ENCODE measurements at regions of chr4 and their contacts with region 1.

Region 1: DNA sequence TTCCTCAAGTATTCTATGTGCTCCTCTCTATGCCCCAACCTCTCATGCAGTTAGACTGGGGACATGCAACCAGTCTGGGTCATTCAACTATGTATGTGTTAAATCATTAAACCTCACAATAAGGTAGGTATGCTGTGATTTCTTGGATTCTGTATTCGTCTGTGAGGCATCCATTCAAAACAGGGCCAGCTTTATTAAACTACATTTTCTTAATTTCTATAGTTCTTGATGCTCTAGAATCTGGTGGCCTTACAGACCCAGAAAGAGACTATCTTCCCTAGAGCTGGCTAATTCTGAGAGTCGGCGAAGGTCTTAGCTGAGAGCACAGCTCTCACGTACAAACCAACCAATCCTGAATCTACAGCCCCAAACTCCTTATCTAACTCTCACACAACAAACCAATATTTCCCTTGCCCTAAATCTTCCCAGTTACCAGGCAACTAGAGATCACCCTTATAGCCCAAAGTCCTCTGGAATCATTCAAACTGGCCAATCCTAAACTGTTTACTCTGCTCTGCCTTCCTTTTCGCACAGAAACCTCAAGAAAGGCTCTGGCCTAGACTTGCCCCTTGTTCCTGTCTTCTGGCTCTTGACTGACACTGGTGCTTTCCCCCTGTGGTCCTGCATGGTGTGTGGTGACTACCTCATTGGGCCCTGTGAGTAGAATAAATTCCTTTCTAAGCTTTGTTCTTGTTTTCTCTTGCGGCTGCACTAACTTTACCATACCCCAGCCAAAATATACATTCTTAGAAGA is 203.5 kb upstream of the TET2 start:
- DNase-seq: peak; percentile 73
- ATAC-seq: peak; percentile 95
- H3K4me3 Mint-ChIP-seq: peak overlapping the region; percentile 57
- H3K27ac Mint-ChIP-seq: peak overlapping the region; percentile 85
- H3K4me1 Mint-ChIP-seq: peaks cover 35% of the 10 kb centered on the region
- H3K27me3 Mint-ChIP-seq: no peaks in the 10 kb centered on the region

Region 2: DNA sequence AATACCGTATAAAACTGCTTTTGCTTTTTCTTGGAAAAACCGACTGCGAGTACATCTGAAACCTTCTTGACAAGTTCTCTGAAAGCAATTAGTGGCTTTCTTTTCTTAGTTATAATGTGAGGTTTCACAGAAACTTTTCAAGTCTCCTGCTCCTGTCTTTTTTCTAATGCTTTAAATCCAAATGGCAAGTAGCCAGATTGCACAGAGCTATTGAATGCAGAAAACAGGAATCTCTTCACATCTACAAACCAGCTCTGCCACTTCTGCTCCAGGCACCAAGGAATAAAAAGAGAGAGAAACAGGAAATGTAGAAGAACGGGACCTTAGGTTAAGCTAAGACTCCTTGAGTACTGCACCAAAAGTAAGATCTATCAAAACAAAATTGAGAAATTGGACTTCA is 63.8 kb before region 1 on chr4:
- POLR2A ChIA-PET with region 1: interaction called, 10 read pairs
- DNase-seq: no peak
- ATAC-seq: peak; percentile 79
- H3K4me3 Mint-ChIP-seq: peak overlapping the region; percentile 80
- H3K27ac Mint-ChIP-seq: peak overlapping the region; percentile 94
- H3K4me1 Mint-ChIP-seq: peaks cover 25% of the 10 kb centered on the region
- H3K27me3 Mint-ChIP-seq: no peaks in the 10 kb centered on the region

Region 3: GRCh38 chr4:104930298-104930697 is 12.9 kb before region 1 on chr4:
- POLR2A ChIA-PET with region 1: interaction called, 11 read pairs
- DNase-seq: no peak
- ATAC-seq: no peak
- H3K4me3 Mint-ChIP-seq: peak overlapping the region; percentile 36
- H3K27ac Mint-ChIP-seq: peak overlapping the region; percentile 89
- H3K4me1 Mint-ChIP-seq: peaks cover 40% of the 10 kb centered on the region
- H3K27me3 Mint-ChIP-seq: no peaks in the 10 kb centered on the region

Region 4: DNA sequence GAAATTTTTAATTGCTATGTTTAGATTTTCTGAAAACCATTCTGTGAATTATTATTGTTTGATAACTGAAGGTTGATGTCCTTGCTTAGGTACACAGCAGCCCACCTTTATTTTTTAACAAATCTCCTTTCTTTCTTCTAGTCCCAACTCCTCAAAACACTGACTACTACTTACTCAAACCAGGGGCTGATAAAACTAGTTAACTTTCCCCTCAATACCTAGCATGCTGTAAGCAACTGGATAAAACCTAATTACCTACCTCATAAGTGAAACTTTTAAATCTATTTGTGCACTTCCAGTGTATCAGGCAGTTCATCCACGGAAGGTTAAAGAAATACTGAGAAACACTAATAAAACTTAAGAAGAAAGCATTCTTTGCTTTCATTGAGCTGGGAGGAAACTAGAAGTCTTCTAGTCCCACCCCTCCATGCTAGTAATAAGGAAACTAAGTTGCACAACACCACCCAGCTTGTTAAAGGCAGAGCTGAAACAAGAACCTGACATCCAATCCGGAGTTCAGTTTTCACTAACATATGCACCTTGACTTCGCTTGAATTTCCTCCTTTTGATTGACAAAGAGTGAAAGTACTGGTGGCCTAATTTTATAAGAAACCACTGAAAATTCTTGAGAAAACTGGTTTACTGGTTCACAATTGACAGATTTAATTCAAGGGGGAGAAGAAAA is 23.3 kb after region 1 on chr4:
- POLR2A ChIA-PET with region 1: interaction called, 14 read pairs
- DNase-seq: no peak
- ATAC-seq: peak; percentile 99
- H3K4me3 Mint-ChIP-seq: peak overlapping the region; percentile 87
- H3K27ac Mint-ChIP-seq: peak overlapping the region; percentile 99
- H3K4me1 Mint-ChIP-seq: peaks cover 22% of the 10 kb centered on the region
- H3K27me3 Mint-ChIP-seq: no peaks in the 10 kb centered on the region

Region 5: GRCh38 chr4:105473324-105474098 is 530.3 kb after region 1 on chr4 and contains the start of gene PPA2:
- POLR2A ChIA-PET with region 1: interaction called, 12 read pairs
- DNase-seq: peak; percentile 90
- ATAC-seq: peak; percentile 84
- H3K4me3 Mint-ChIP-seq: peak within 1 kb of the TSS; percentile 98
- H3K27ac Mint-ChIP-seq: peak within 1 kb of the TSS; percentile 97
- H3K4me1 Mint-ChIP-seq: peaks cover 31% of the 10 kb centered on the region
- H3K27me3 Mint-ChIP-seq: peaks cover 2% of the 10 kb centered on the region
- total RNA-seq, gene PPA2: 72.0 to 81.9 TPM

Measured in activated naive CD8-positive, alpha-beta T cell treated with anti-CD3 and anti-CD28 coated beads, Interleukin-2, amount 10 ng/mL, durations not matched to agents 7 days and 5 days (primary cell).